ENCODE measurements at regions of chr7 and their contacts with region 1.

Region 1: GRCh38 chr7:75914730-75915585 is at the start of gene POR:
- DNase-seq: peak; percentile 95 to 98 (median 96)
- H3K4me3 ChIP-seq: peak within 1 kb of the TSS; percentile 75 to 95 (median 92)
- H3K27ac ChIP-seq: peak within 1 kb of the TSS; percentile 91 to 96
- H3K4me1 ChIP-seq: peaks cover 0 to 6% (median 5%) of the 10 kb centered on the region in 3 donors
- H3K27me3 ChIP-seq: no peaks in the 10 kb centered on the region
- CTCF ChIP-seq: peak; percentile 23
- total RNA-seq, gene POR: 130 TPM

Region 2: DNA sequence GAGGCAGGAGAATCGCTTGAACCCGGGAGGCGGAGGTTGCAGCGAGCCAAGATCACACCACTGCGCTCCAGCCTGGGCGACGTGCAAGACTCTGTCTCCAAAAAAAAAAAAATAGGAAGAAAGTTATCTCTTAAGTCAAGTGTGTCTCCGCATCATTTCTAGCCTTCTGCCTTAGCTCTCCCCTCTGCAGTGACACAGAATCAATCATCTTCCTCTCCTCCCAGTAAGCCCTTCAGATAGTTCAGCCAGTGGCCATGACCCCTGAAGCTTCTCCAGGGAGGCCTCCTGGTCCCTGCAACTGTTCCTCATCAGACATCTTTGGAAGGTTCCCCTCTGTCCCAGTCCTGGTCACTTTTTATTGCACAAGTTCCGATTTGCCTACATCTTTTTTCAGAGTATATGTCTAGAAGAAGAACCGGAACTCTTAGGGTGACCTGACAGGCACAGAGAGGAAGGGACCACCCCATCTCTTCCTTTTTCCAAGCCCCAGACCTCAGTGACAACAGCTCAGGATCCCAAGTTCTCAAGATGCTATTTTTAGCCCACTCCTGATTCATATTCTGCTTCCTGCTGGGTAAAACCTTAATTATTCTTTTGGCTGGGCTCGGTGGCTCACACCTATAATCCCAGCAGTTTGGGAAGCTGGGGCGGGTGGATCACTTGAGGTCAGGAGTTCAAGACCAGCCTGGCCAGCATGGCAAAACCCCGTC is 42.7 kb before region 1 on chr7:
- intact Hi-C with region 1: no loop called
- DNase-seq: peak in 2 of 5 donors; percentile 60 to 85
- H3K4me3 ChIP-seq: no peak overlapping the region
- H3K27ac ChIP-seq: peak overlapping the region in 1 of 2 donors; percentile 60
- H3K4me1 ChIP-seq: no peaks in the 10 kb centered on the region
- H3K27me3 ChIP-seq: no peaks in the 10 kb centered on the region
- CTCF ChIP-seq: no peak

Region 3: GRCh38 chr7:75957012-75957736 is 42.2 kb after region 1 on chr7:
- intact Hi-C with region 1: loop called (anchors 5 kb)
- DNase-seq: peak; percentile 45 to 87 (median 75)
- H3K4me3 ChIP-seq: no peak overlapping the region
- H3K27ac ChIP-seq: peak overlapping the region in 1 of 2 donors; percentile 43
- H3K4me1 ChIP-seq: peaks cover 0 to 14% (median 12%) of the 10 kb centered on the region in 3 donors
- H3K27me3 ChIP-seq: no peaks in the 10 kb centered on the region
- CTCF ChIP-seq: no peak

Region 4: DNA sequence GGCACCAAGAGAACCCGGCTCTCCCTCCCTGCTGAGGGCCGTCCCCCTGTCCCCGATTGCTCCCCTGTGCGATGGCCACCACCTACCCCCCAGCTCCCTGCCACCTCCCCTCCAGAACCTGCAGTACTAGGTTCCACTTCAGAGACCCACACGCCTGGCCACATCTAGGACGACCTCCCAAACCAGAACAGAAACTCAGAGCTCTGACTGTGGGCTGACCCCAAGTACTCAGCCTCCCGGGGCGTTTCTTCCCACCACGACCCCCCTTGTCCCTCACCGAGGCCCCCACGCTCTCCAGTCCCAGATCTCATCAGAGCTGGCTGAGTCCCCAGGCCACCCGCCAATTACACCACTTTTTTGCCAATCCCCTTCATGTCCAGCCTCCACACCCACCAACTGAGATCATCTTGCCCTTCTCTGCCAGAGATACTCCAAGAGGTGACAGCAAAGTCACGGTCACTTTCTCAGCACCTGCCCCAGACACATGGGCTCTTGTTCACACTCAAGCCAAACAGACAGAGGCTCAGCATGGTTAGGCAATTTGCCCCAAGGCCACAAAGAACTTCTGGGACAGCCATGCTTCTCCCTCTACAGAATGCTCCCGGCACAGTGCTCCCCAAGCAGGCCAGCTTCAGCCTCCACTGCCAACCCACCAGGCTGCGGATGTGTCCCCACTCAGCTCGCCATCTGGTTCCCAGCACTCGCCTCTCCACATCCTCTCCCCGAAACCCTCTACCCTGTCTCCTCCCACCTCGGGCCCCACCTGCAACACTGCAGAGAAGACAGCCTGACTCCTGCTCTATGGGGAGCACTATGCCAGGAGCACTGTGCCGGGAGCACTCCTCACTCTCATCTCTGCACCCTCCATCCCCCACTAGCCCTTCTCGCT is 74.8 kb after region 1 on chr7:
- intact Hi-C with region 1: no loop called
- DNase-seq: peak in 4 of 5 donors; percentile 34 to 78 (median 49)
- H3K4me3 ChIP-seq: no peak overlapping the region
- H3K27ac ChIP-seq: peak overlapping the region; percentile 1 to 67
- H3K4me1 ChIP-seq: peaks cover 0 to 19% (median 8%) of the 10 kb centered on the region in 3 donors
- H3K27me3 ChIP-seq: no peaks in the 10 kb centered on the region
- CTCF ChIP-seq: no peak